AG04449 (cell line): ENCODE measurements at regions of chr15 and their contacts with region 1.

Region 1: GRCh38 chr15:89874926-89875564 is 18.7 kb downstream of the AP3S2 start:
- DNase-seq: no peak
- H3K4me3 ChIP-seq: no peak overlapping the region
- CTCF ChIP-seq: peak; percentile 99

Region 2: GRCh38 chr15:89740137-89740536 is 134.9 kb before region 1 on chr15:
- CTCF ChIA-PET with region 1: interaction called, 842 read pairs
- POLR2A ChIA-PET with region 1: no interaction called
- DNase-seq: no peak
- H3K4me3 ChIP-seq: no peak overlapping the region
- CTCF ChIP-seq: peak; percentile 76

Region 3: DNA sequence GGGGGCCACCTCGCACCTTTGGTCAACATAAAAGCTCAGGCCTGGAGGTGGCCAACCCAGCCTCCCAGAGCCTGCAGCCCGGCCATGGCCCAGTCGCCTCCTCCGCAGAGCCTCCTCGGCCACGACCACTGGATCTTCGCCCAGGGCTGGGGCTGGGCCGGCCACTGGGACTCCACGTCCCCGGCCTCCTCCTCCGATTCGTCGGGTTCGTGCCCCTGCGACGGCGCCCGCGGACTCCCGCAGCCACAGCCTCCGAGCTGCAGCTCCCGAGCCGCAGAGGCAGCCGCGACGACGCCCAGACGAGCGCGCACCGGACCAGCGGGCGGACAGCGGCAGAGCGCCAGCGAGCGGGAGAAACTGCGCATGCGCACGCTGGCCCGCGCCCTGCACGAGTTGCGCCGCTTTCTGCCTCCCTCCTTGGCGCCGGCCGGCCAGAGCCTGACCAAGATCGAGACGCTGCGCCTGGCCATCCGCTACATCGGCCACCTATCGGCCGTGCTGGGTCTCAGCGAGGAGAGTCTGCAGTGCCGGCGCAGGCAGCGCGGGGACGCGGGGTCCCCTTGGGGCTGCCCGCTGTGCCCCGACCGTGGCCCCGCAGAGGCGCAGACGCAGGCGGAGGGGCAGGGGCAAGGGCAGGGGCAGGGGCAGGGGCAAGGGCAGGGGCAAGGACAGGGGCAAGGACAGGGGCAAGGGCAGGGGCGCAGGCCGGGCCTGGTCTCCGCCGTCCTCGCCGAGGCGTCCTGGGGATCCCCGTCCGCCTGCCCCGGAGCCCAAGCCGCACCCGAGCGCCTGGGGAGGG is 98.6 kb before region 1 on chr15 and contains the start of gene MESP2:
- CTCF ChIA-PET with region 1: interaction called, 90 read pairs
- POLR2A ChIA-PET with region 1: no interaction called
- DNase-seq: no peak
- H3K4me3 ChIP-seq: peak within 1 kb of the TSS; percentile 55
- CTCF ChIP-seq: peak; percentile 54

Region 4: GRCh38 chr15:89836255-89837133 is 38.6 kb before region 1 on chr15:
- CTCF ChIA-PET with region 1: interaction called, 30 read pairs
- POLR2A ChIA-PET with region 1: interaction called, 4 read pairs
- DNase-seq: peak; percentile 93
- H3K4me3 ChIP-seq: peak overlapping the region; percentile 35
- CTCF ChIP-seq: no peak

Region 5: DNA sequence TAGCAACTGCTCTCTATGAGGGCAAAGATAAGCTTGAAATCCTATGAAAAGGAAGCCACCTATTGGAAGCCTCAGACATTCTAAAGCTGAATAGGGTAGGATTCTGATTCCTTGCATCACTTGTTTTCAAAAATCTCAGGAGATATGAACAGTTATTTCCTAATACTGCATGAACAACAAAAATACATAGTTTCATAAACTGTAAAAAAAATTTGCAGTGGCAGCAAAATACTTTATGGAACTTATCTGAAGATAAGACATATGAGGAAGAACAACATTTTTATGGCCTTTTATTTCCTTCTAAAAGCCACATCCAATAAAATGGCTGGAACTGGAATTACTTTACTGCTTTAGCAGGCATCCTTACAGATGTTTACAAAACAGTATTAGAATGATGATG is 11.1 kb before region 1 on chr15:
- CTCF ChIA-PET with region 1: interaction called, 147 read pairs
- POLR2A ChIA-PET with region 1: interaction called, 3 read pairs
- DNase-seq: no peak
- H3K4me3 ChIP-seq: no peak overlapping the region
- CTCF ChIP-seq: no peak

Region 6: GRCh38 chr15:89893696-89894455 is 18.8 kb after region 1 on chr15 and contains the start of gene AP3S2:
- CTCF ChIA-PET with region 1: interaction called, 233 read pairs
- POLR2A ChIA-PET with region 1: no interaction called
- DNase-seq: peak; percentile 62
- H3K4me3 ChIP-seq: peak within 1 kb of the TSS; percentile 91
- CTCF ChIP-seq: no peak

Region 7: DNA sequence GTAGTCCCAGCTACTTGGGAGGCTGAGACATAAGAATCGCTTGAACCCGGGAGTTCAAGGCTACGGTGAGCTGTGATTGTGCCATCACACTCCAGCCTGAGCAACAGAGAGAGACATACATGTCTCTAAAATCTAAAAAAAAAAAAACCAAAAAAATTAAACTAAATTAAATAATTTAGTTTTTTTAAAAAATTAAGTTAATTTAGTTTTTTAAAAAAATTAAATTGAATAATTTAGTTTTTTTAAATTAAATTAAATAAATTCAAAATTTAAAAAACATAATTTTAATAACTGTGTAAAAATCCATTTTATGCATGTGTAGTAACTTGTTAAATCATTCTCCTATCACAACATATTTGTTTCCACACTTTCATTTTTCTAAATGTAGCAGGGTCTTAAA is 57.8 kb after region 1 on chr15:
- CTCF ChIA-PET with region 1: no interaction called
- POLR2A ChIA-PET with region 1: no interaction called
- DNase-seq: no peak
- H3K4me3 ChIP-seq: no peak overlapping the region
- CTCF ChIP-seq: no peak